CD4-positive, alpha-beta T cell (primary cell): ENCODE measurements at regions of chr3 and their contacts with region 1.

Region 1: DNA sequence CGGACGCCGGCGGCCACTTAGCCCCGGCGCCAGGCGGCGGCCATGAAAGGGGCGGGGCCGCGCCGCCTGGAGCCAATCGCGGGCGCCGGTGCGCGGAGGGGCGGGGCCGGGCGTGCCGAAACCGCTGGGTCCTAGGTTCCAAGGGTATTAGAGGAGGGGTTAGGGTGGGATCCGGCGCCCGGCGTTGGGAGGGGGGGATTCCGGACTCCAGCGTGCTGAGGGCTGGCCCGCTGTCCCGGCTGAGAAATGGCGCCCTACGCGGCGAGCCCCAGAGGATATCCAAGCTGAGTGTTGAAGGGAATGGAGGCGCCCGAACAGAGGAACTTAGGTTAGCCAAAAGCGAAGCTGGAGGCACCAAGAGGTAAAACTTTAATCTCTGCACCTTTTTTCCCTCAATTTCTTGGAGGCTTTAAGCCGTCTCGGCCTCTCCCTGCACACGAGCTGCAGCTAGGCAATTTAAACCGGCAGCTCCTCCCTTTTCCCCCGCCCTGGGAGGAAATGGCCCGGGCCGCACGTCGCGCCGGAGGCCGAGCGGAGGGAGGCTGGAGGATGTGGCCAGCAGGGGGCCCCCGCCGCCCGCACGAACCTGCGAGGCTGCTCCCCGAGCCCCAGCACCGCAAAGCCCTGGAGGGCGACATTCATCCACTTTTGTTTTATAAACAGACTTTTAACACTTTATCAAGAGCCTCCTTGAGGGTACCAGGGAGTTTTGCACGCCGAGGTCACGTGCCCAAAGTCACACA is at the start of gene XXYLT1:
- DNase-seq: peak; percentile 82 to 94 (median 88)
- ATAC-seq: peak; percentile 84
- H3K4me3 ChIP-seq: peak within 1 kb of the TSS; percentile 69
- H3K4me3 Mint-ChIP-seq: peak within 1 kb of the TSS; percentile 95
- H3K27ac ChIP-seq: peak within 1 kb of the TSS in 1 of 2 donors; percentile 38
- H3K27ac Mint-ChIP-seq: peak within 1 kb of the TSS; percentile 80
- H3K4me1 ChIP-seq: peaks cover 31% of the 10 kb centered on the region
- H3K4me1 Mint-ChIP-seq: peaks cover 15% of the 10 kb centered on the region
- H3K27me3 ChIP-seq: no peaks in the 10 kb centered on the region
- H3K27me3 Mint-ChIP-seq: no peaks in the 10 kb centered on the region
- CTCF ChIP-seq: peak; percentile 88
- total RNA-seq, gene XXYLT1: 3.1 to 3.7 TPM

Region 2: GRCh38 chr3:194671900-194672808 is 599.1 kb before region 1 on chr3 and contains the start of gene LSG1:
- CTCF ChIA-PET with region 1: interaction called, 35 read pairs
- POLR2A ChIA-PET with region 1: interaction called, 16 read pairs
- intact Hi-C with region 1: loop called in 1 of 2 experiments (anchors 2 kb)
- DNase-seq: peak; percentile 80 to 96 (median 87)
- ATAC-seq: peak; percentile 97
- H3K4me3 ChIP-seq: peak within 1 kb of the TSS; percentile 83
- H3K4me3 Mint-ChIP-seq: peak within 1 kb of the TSS; percentile 99
- H3K27ac ChIP-seq: peak within 1 kb of the TSS; percentile 94 to 99
- H3K27ac Mint-ChIP-seq: peak within 1 kb of the TSS; percentile 99
- H3K4me1 ChIP-seq: peaks cover 18% of the 10 kb centered on the region
- H3K4me1 Mint-ChIP-seq: peaks cover 46% of the 10 kb centered on the region
- H3K27me3 ChIP-seq: no peaks in the 10 kb centered on the region
- H3K27me3 Mint-ChIP-seq: no peaks in the 10 kb centered on the region
- CTCF ChIP-seq: no peak
- total RNA-seq, gene LSG1: 37.9 to 44.6 TPM

Region 3: GRCh38 chr3:195385526-195385925 is 114.2 kb after region 1 on chr3:
- CTCF ChIA-PET with region 1: no interaction called
- POLR2A ChIA-PET with region 1: no interaction called
- intact Hi-C with region 1: no loop called
- DNase-seq: no peak
- ATAC-seq: no peak
- H3K4me3 ChIP-seq: no peak overlapping the region
- H3K4me3 Mint-ChIP-seq: no peak overlapping the region
- H3K27ac ChIP-seq: no peak overlapping the region
- H3K27ac Mint-ChIP-seq: peak overlapping the region; percentile 13
- H3K4me1 ChIP-seq: no peaks in the 10 kb centered on the region
- H3K4me1 Mint-ChIP-seq: peaks cover 51% of the 10 kb centered on the region
- H3K27me3 ChIP-seq: no peaks in the 10 kb centered on the region
- H3K27me3 Mint-ChIP-seq: no peaks in the 10 kb centered on the region
- CTCF ChIP-seq: no peak

Region 4: GRCh38 chr3:195442573-195443390 is 171.5 kb after region 1 on chr3 and contains the start of gene ACAP2:
- CTCF ChIA-PET with region 1: interaction called, 12 read pairs
- POLR2A ChIA-PET with region 1: interaction called, 7 read pairs
- intact Hi-C with region 1: loop called (anchors 5 kb)
- DNase-seq: peak; percentile 95 to 100 (median 99)
- ATAC-seq: peak; percentile 91
- H3K4me3 ChIP-seq: peak within 1 kb of the TSS; percentile 89
- H3K4me3 Mint-ChIP-seq: peak within 1 kb of the TSS; percentile 98
- H3K27ac ChIP-seq: peak within 1 kb of the TSS; percentile 74 to 85
- H3K27ac Mint-ChIP-seq: peak within 1 kb of the TSS; percentile 93
- H3K4me1 ChIP-seq: peaks cover 32% of the 10 kb centered on the region
- H3K4me1 Mint-ChIP-seq: peaks cover 65% of the 10 kb centered on the region
- H3K27me3 ChIP-seq: no peaks in the 10 kb centered on the region
- H3K27me3 Mint-ChIP-seq: no peaks in the 10 kb centered on the region
- CTCF ChIP-seq: no peak
- total RNA-seq, gene ACAP2: 50.7 to 51.4 TPM

Region 5: GRCh38 chr3:195522254-195523023 is 251.2 kb after region 1 on chr3:
- CTCF ChIA-PET with region 1: interaction called, 26 read pairs
- POLR2A ChIA-PET with region 1: interaction called, 24 read pairs
- intact Hi-C with region 1: loop called (anchors 1 kb)
- DNase-seq: peak in 4 of 14 experiments; percentile 59 to 71 (median 63)
- ATAC-seq: peak; percentile 34
- H3K4me3 ChIP-seq: no peak overlapping the region
- H3K4me3 Mint-ChIP-seq: no peak overlapping the region
- H3K27ac ChIP-seq: no peak overlapping the region
- H3K27ac Mint-ChIP-seq: peak overlapping the region; percentile 82
- H3K4me1 ChIP-seq: peaks cover 28% of the 10 kb centered on the region
- H3K4me1 Mint-ChIP-seq: peaks cover 59% of the 10 kb centered on the region
- H3K27me3 ChIP-seq: no peaks in the 10 kb centered on the region
- H3K27me3 Mint-ChIP-seq: no peaks in the 10 kb centered on the region
- CTCF ChIP-seq: peak; percentile 93

Region 6: GRCh38 chr3:195850857-195851543 is 579.7 kb after region 1 on chr3:
- CTCF ChIA-PET with region 1: interaction called, 10 read pairs
- POLR2A ChIA-PET with region 1: no interaction called
- intact Hi-C with region 1: loop called in 1 of 2 experiments (anchors 5 kb)
- DNase-seq: peak; percentile 75 to 94 (median 86)
- ATAC-seq: peak; percentile 100
- H3K4me3 ChIP-seq: no peak overlapping the region
- H3K4me3 Mint-ChIP-seq: peak overlapping the region; percentile 7
- H3K27ac ChIP-seq: no peak overlapping the region
- H3K27ac Mint-ChIP-seq: no peak overlapping the region
- H3K4me1 ChIP-seq: peaks cover 5% of the 10 kb centered on the region
- H3K4me1 Mint-ChIP-seq: peaks cover 6% of the 10 kb centered on the region
- H3K27me3 ChIP-seq: no peaks in the 10 kb centered on the region
- H3K27me3 Mint-ChIP-seq: peaks cover 5% of the 10 kb centered on the region
- CTCF ChIP-seq: peak; percentile 100